ENCODE measurements at regions of chr12 and their contacts with region 1.

Region 1: GRCh38 chr12:46217541-46218321 is 51.1 kb downstream of the SLC38A1 start:
- DNase-seq: peak; percentile 53
- H3K4me3 Mint-ChIP-seq: peak overlapping the region; percentile 67
- H3K27ac Mint-ChIP-seq: peak overlapping the region; percentile 99
- H3K4me1 Mint-ChIP-seq: peaks cover 88% of the 10 kb centered on the region
- H3K27me3 Mint-ChIP-seq: no peaks in the 10 kb centered on the region

Region 2: DNA sequence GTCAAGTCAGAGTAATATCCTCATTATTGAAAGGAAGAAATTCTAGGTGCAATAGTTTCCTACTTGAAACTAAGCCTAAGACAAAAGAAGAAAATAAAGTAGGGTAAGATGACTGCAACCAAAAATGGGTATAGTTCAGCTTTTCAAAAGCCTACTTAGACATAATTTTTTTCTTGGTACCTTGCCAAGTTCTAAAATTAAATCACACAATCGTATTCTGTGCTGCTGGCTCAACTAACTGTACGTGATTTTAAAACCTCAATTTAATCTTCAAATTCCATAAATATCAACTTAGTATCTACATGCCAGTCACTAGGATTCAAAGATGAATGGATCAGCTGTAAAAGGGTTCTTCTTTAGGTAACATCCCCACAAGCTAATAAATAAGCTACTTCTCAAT is 284.2 kb before region 1 on chr12:
- intact Hi-C with region 1: no loop called
- DNase-seq: no peak
- H3K4me3 Mint-ChIP-seq: no peak overlapping the region
- H3K27ac Mint-ChIP-seq: no peak overlapping the region
- H3K4me1 Mint-ChIP-seq: peaks cover 5% of the 10 kb centered on the region
- H3K27me3 Mint-ChIP-seq: no peaks in the 10 kb centered on the region

Region 3: DNA sequence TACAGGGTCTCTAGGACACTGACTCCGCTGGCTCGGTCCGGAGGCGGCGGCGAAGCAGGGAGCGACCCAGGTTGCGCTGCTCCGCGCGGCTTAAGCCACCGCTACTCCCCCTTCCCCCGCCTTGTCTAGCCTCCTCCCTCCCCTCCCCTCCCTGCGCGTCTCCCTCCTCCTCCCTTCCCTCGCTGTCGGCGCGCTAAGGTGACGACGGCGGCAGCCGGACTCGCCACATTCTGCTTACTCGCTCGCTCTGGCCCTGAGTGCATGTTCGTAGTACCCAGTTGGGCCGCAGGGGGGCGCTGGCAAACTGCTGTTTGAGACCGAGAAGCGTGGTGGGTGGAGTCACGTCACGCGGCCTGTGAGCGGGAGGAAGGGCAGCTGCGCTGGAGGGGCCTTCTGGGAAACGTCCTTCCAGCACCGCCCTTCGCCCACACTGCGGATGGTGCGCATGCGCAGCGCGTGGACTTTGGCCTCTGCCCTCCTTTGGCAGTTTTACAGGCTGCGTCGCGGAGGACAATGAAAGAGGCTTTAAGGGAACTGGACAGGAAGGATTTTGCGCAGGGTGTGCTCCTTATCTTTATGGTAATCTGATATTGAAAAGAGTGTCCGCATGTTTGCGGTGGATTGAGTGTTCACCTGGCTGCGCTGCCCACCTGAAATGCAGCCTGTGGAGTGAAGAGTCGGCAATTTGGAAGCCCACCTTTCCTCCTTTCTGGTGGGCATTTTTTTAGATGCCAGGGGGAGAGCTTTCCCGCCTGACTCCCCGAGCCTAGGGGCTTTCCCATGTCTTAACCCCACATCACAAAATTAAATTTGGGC is 227.1 kb before region 1 on chr12 and contains the start of gene SCAF11:
- intact Hi-C with region 1: loop called (anchors 2 kb)
- DNase-seq: peak; percentile 100
- H3K4me3 Mint-ChIP-seq: peak within 1 kb of the TSS; percentile 93
- H3K27ac Mint-ChIP-seq: peak within 1 kb of the TSS; percentile 98
- H3K4me1 Mint-ChIP-seq: peaks cover 38% of the 10 kb centered on the region
- H3K27me3 Mint-ChIP-seq: peaks cover 6% of the 10 kb centered on the region
- total RNA-seq, gene SCAF11: 125 and 128 TPM in 2 replicates

Region 4: GRCh38 chr12:46100855-46101484 is 116.8 kb before region 1 on chr12:
- intact Hi-C with region 1: no loop called
- DNase-seq: no peak
- H3K4me3 Mint-ChIP-seq: no peak overlapping the region
- H3K27ac Mint-ChIP-seq: no peak overlapping the region
- H3K4me1 Mint-ChIP-seq: no peaks in the 10 kb centered on the region
- H3K27me3 Mint-ChIP-seq: peaks cover 12% of the 10 kb centered on the region

Region 5: GRCh38 chr12:46268590-46269558 is 51.1 kb after region 1 on chr12 and contains the start of gene SLC38A1:
- intact Hi-C with region 1: loop called (anchors 1 kb)
- DNase-seq: peak; percentile 86
- H3K4me3 Mint-ChIP-seq: no peak within 1 kb of the TSS
- H3K27ac Mint-ChIP-seq: no peak within 1 kb of the TSS
- H3K4me1 Mint-ChIP-seq: peaks cover 26% of the 10 kb centered on the region
- H3K27me3 Mint-ChIP-seq: no peaks in the 10 kb centered on the region
- total RNA-seq, gene SLC38A1: 152 and 154 TPM in 2 replicates

Region 6: GRCh38 chr12:46473634-46474329 is 256.1 kb after region 1 on chr12:
- intact Hi-C with region 1: loop called (anchors 5 kb)
- DNase-seq: no peak
- H3K4me3 Mint-ChIP-seq: peak overlapping the region; percentile 33
- H3K27ac Mint-ChIP-seq: peak overlapping the region; percentile 80
- H3K4me1 Mint-ChIP-seq: peaks cover 44% of the 10 kb centered on the region
- H3K27me3 Mint-ChIP-seq: no peaks in the 10 kb centered on the region

Region 7: DNA sequence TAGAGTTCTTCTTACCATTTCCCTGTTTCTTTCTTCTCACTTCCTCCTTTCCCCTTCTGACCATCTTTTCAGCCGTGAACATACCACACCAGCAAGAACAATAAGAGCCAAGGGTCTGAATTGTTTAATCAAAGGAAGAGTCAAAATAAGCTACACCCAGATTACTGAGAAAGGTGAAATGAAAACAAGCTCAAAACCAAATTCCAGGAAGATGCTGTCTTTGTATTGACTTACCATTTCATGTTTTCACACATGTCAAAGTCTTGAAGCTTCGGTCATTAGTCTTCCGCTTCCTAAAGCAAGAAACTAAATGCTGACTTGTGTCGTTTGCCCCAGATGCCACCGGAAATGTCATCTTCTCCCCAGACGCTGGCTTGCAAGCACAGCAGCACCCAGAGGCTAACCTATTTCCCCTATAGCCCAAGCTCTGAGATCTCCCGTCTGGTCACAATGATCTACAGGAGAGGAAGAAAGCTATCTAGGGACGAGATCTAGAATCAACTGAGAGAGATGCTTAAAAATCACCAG is 998.5 kb after region 1 on chr12:
- intact Hi-C with region 1: loop called (anchors 5 kb)
- DNase-seq: peak; percentile 72
- H3K4me3 Mint-ChIP-seq: peak overlapping the region; percentile 97
- H3K27ac Mint-ChIP-seq: peak overlapping the region; percentile 96
- H3K4me1 Mint-ChIP-seq: peaks cover 52% of the 10 kb centered on the region
- H3K27me3 Mint-ChIP-seq: no peaks in the 10 kb centered on the region

Region 8: DNA sequence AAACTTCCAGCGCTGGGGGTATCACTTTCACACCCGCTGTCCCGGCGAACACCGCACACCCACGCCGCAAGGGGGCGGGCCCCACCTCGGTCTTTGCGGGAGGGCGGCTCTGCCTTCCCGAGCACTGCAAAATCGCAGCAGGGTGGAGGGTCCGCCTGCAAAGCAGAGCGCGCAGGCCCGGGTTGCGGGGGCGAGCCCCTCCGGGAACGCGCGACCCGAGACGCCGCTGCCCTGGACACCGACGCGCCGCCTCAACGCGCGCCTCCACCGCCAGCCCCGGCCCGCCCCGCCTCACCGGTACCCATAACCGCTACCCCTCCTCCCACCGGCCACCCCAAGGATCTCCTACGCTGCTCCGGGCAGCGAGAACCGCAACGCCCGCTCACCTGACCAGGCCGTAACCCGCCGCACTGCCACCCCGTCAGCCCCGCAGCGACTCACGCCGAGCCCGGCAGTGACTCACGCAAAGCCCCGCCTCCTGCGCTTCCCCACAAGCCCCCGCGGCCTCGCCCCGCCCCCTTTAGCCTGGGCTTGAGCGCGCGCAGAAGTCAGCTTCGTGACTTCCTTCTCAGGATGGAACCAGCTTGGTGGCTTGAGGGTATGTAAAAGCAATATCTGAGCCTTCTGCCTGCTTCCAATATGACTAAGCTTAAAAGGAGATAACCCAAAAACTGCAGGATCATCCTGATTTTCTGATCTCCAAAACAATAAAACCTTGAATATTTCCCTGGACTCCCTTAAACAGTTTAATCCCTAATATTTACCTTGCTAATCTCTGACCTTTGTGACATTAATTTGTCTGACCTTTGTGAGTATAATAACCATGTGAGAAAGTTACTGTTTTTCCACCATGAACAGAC is 1488.1 kb after region 1 on chr12 and contains the start of gene RPAP3:
- intact Hi-C with region 1: loop called (anchors 5 kb)
- DNase-seq: peak; percentile 96
- H3K4me3 Mint-ChIP-seq: peak within 1 kb of the TSS; percentile 96
- H3K27ac Mint-ChIP-seq: peak within 1 kb of the TSS; percentile 98
- H3K4me1 Mint-ChIP-seq: peaks cover 55% of the 10 kb centered on the region
- H3K27me3 Mint-ChIP-seq: no peaks in the 10 kb centered on the region
- total RNA-seq, gene RPAP3: 57.4 and 58.7 TPM in 2 replicates

Measured in activated T-helper 2 cell treated with anti-CD3 and anti-CD28 coated beads, Interferon-gamma antibody, Interleukin-2, Interleukin-4, amounts not matched to agents 10 μg/mL and 5 μg/mL and 100 μg/mL, durations not matched to agents 14 hours and 24 hours and 36 hours (primary cell).